ENCODE measurements at regions of chr22 and their contacts with region 1.

Region 1: DNA sequence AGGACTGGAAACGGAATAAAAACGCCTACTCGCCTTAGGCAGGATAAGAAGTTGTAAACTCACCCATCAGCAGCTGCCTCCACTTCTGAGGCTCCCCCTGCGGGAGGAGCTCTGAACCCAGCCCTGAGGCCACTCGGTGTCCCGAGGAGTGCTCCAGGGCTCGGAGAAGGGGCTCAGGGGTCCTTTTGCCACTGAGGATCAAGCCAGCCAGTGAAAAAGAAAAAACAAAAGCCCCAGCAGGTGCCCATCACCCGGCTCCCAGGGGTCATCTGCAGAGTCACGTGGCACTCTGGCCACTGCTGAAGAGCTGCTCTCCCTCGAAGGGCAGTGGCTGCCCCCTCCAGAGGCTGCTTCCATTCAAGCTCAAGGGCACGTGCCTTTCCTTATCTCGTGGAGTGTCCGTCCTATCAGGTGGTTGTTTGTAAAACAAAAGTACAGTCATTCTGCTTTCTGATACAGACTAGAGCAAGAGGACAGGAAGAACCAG is 29.0 kb downstream of the NUP50 start:
- DNase-seq: peak; percentile 31 to 69 (median 54)
- ATAC-seq: peak; percentile 97
- H3K4me3 ChIP-seq: no peak overlapping the region
- H3K27ac ChIP-seq: no peak overlapping the region
- H3K4me1 ChIP-seq: peaks cover 8 to 13% of the 10 kb centered on the region in 2 experiments; a peak in 4 of 5 replicates
- H3K27me3 ChIP-seq: no peaks in the 10 kb centered on the region
- CTCF ChIP-seq: peak; percentile 38 to 46 (median 43); a peak in 4 of 6 replicates
- EP300 ChIP-seq: no peak
- POLR2A ChIP-seq: no peak
- RAD21 ChIP-seq: peak; percentile 12 to 48; a peak in 3 of 4 replicates

Region 2: GRCh38 chr22:45112136-45112879 is 80.4 kb before region 1 on chr22:
- CTCF ChIA-PET with region 1: no interaction called
- POLR2A ChIA-PET with region 1: no interaction called
- in situ Hi-C with region 1: loop called (anchors 10 kb)
- intact Hi-C with region 1: no loop called
- DNase-seq: no peak
- ATAC-seq: no peak
- H3K4me3 ChIP-seq: no peak overlapping the region
- H3K27ac ChIP-seq: no peak overlapping the region
- H3K4me1 ChIP-seq: no peaks in the 10 kb centered on the region
- H3K27me3 ChIP-seq: peaks cover 0 to 7% of the 10 kb centered on the region in 2 experiments; a peak in 3 of 5 replicates
- CTCF ChIP-seq: no peak
- EP300 ChIP-seq: no peak
- POLR2A ChIP-seq: no peak
- RAD21 ChIP-seq: no peak

Region 3: DNA sequence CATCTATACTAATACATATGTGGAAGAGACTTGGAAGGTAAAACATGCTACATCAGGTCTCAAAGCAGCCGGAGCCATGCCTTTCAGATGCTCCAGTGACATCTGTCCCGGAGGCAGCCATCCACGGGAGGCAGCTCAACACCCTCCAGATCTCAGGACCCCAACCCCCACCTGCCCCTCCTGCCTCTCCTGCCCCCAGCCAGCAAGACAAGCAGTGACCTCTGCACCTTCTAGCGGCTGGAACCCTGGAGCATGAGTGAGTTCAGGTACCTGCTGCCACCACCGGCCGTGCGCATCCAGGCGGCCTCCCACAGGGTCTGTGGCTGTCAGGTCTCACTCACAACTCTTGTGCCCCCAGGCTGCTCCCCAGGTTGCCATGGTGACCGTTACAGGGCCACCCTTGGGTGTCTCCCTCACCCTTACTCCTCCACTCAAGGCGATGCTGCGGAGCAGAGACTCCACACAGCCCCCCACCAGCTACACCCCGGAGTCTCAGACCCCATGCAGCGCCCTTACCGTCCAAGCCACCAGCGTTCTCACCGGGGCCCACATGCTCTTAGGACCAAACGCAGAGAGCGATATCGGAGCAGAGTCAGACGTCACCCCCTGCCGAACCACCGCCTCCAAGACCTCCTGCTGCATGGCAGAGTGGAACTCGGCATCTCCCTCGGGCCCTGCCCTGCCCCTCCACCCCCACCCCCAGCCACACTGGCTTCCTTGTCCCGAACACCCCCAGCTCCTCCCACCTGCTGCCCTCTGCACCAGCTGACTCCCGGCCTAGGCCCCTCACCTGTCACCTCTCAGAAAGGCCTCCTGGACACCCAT is 1510.6 kb after region 1 on chr22:
- CTCF ChIA-PET with region 1: no interaction called
- POLR2A ChIA-PET with region 1: no interaction called
- in situ Hi-C with region 1: loop called (anchors 10 kb)
- intact Hi-C with region 1: no loop called
- DNase-seq: no peak
- ATAC-seq: no peak
- H3K4me3 ChIP-seq: no peak overlapping the region
- H3K27ac ChIP-seq: no peak overlapping the region
- H3K4me1 ChIP-seq: no peaks in the 10 kb centered on the region
- H3K27me3 ChIP-seq: no peaks in the 10 kb centered on the region
- CTCF ChIP-seq: no peak
- EP300 ChIP-seq: no peak
- POLR2A ChIP-seq: no peak
- RAD21 ChIP-seq: no peak